ENCODE measurements at regions of chr10 and their contacts with region 1.

Region 1: DNA sequence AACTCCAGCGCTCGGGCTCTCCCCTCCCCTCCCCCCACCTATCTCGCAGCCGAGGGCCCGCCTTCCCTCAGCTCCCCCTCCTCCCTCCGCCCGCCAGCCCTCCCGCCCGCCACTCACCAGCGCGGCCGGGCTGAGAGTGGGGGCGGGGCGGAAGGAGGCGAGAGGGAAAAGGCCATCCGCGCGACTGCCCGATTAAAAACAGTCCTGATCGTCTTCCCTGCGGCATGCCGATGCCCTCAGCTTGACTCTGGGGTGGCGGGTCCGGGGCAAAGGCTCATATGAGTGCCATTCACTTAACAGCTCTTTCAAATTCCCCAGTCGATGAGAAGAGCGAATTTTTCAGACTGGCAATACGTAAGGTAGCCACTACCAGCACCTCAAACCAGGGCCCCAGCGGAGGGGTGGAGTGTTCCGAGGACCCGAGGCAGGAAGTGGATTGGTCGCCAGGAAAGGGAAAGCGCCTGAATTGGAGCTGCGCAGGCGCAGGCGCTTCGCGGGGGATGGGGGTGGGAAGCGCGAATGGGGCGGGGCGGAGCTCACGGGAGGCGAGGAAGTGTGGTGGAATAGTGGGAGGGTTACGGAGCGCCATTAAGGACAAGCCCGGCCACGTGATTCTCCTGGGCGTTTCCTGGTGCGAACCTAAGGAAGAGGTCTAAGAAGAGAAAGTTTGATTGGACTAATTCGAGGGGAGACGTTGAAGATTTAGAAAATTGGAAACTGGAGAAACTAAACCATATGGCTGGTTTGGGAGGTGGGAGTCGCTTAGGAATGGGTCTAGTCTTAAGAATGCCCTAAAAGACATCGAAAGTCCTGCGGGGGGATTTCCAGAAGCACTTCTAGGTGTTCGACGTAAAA is at the start of gene UPF2:
- DNase-seq: peak; percentile 98 to 99
- ATAC-seq: peak; percentile 94 to 95
- H3K4me3 ChIP-seq: peak within 1 kb of the TSS; percentile 90
- H3K27ac ChIP-seq: peak within 1 kb of the TSS; percentile 99
- H3K4me1 ChIP-seq: peaks cover 17% of the 10 kb centered on the region
- CTCF ChIP-seq: no peak
- EP300 ChIP-seq: no peak
- POLR2A ChIP-seq: peak; percentile 23; the same call in 1 of the 2 replicates
- RAD21 ChIP-seq: no peak
- polyA plus RNA-seq, gene UPF2: 17.0 and 21.6 TPM in 2 replicates

Region 2: DNA sequence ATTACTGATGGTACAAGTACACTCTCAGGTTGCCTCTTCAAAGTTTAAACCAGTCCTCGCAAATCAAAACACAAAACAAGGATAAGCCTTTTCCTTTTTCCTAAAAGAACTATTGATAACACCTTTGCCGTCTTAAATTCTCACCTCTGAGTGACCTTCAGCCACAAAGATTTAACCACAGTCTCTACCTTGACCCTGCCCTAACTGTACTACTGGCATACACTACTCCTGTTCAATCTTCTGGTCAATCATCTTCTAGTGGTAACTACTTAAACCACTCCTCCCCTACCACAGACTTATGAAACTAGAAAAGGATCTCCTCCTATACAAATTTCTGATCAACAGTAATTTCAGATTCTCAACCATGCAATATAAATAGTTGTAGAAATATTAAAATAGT is 15.5 kb before region 1 on chr10:
- CTCF ChIA-PET with region 1: interaction called, 4 read pairs
- POLR2A ChIA-PET with region 1: interaction called, 11 read pairs
- DNase-seq: no peak
- ATAC-seq: no peak
- H3K4me3 ChIP-seq: no peak overlapping the region
- H3K27ac ChIP-seq: no peak overlapping the region
- H3K4me1 ChIP-seq: peaks cover 2% of the 10 kb centered on the region; the same call in 1 of the 3 replicates
- CTCF ChIP-seq: no peak
- EP300 ChIP-seq: no peak
- POLR2A ChIP-seq: no peak
- RAD21 ChIP-seq: no peak

Region 3: GRCh38 chr10:12068449-12069269 is 25.6 kb after region 1 on chr10 and contains the start of gene DHTKD1:
- CTCF ChIA-PET with region 1: interaction called, 3 read pairs
- POLR2A ChIA-PET with region 1: interaction called, 13 read pairs
- DNase-seq: peak; percentile 97 to 99
- ATAC-seq: peak; percentile 98 to 99
- H3K4me3 ChIP-seq: peak within 1 kb of the TSS; percentile 85
- H3K27ac ChIP-seq: peak within 1 kb of the TSS; percentile 77 to 94
- H3K4me1 ChIP-seq: peaks cover 17% of the 10 kb centered on the region
- CTCF ChIP-seq: 0 out of 3 replicates have a peak, but pooled peaks have one; percentile 14
- EP300 ChIP-seq: no peak
- POLR2A ChIP-seq: peak; percentile 56
- RAD21 ChIP-seq: no peak
- polyA plus RNA-seq, gene DHTKD1: 21.2 and 23.0 TPM in 2 replicates

Region 4: DNA sequence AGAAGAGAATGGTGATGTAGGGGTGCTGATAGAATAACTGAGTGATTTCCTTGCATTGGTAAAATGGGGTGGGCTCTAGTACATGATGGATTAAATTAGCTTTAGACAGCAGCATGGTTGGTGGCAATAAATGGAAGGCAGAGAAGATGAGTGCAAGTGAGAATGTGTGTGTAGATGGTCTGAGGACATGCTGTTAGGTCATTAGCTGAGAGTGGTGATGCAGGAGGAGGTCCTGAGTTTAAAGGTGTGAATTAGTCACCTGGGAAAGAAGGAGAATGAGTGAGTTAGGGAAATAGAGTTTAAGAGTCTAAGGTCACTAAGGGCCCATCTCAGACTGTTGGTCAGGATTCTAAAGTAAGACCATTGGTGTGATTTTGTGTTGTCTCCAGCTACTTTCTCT is 68.5 kb after region 1 on chr10:
- CTCF ChIA-PET with region 1: no interaction called
- POLR2A ChIA-PET with region 1: no interaction called
- DNase-seq: no peak
- ATAC-seq: no peak
- H3K4me3 ChIP-seq: no peak overlapping the region
- H3K27ac ChIP-seq: no peak overlapping the region
- H3K4me1 ChIP-seq: no peaks in the 10 kb centered on the region
- CTCF ChIP-seq: no peak
- EP300 ChIP-seq: no peak
- POLR2A ChIP-seq: no peak
- RAD21 ChIP-seq: no peak